ENCODE measurements at regions of chr16 and their contacts with region 1.

Region 1: GRCh38 chr16:4402439-4403132 is 13.8 kb downstream of the CORO7 start:
- DNase-seq: peak; percentile 94
- ATAC-seq: peak; percentile 77
- H3K4me3 Mint-ChIP-seq: peak overlapping the region; percentile 30
- H3K27ac Mint-ChIP-seq: no peak overlapping the region
- H3K4me1 Mint-ChIP-seq: peaks cover 6% of the 10 kb centered on the region
- H3K27me3 Mint-ChIP-seq: no peaks in the 10 kb centered on the region
- CTCF ChIP-seq: peak; percentile 97

Region 2: GRCh38 chr16:4271176-4272066 is 131.2 kb before region 1 on chr16:
- CTCF ChIA-PET with region 1: interaction called, 17 read pairs
- POLR2A ChIA-PET with region 1: no interaction called
- DNase-seq: peak; percentile 94
- ATAC-seq: peak; percentile 75
- H3K4me3 Mint-ChIP-seq: peak overlapping the region; percentile 69
- H3K27ac Mint-ChIP-seq: peak overlapping the region; percentile 80
- H3K4me1 Mint-ChIP-seq: peaks cover 14% of the 10 kb centered on the region
- H3K27me3 Mint-ChIP-seq: no peaks in the 10 kb centered on the region
- CTCF ChIP-seq: no peak

Region 3: DNA sequence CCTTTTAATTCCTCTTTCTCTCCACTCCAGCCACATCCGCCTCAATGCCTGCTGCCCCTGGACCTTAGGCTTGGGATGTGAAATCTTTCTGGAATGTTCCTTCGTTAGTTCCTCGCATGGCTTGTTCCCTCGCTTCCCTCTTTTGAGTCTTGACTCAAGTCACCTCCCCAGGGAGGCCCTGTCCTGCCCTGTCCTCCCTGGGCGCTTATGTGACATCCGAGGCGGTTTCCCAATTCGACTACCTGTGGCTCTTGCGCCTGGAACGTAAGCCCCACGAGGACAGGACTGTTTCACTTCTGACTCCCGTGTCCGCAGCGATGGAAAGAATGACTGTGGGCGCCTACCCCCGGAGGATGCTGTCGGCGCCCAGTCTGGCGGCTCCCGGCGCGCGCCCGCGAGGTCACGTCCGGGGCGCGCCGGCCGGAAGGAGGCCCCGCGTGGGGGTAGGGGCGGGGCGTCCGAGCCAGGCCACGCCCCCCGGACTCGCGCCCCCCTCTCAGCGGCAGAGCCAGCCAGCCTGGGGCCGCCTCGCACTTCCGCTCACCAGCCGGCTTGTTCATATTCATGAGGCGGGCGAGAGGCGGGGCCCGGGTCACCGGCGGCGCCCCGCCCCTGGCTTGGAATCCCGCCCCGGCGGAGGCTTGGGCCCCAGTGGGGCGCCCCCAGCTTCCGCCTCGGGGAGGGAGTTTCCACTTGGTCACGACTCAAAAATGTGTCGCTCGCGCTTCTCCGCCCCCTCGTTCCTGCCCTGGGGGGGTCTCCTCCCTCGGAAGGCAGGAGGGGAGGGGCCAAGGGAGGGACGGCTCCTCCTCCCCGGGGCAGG is 95.2 kb before region 1 on chr16:
- CTCF ChIA-PET with region 1: interaction called, 75 read pairs
- POLR2A ChIA-PET with region 1: interaction called, 3 read pairs
- DNase-seq: peak; percentile 94
- ATAC-seq: peak; percentile 78
- H3K4me3 Mint-ChIP-seq: peak overlapping the region; percentile 96
- H3K27ac Mint-ChIP-seq: peak overlapping the region; percentile 97
- H3K4me1 Mint-ChIP-seq: peaks cover 39% of the 10 kb centered on the region
- H3K27me3 Mint-ChIP-seq: no peaks in the 10 kb centered on the region; the same call in 1 of the 2 replicates
- CTCF ChIP-seq: no peak

Region 4: GRCh38 chr16:4339909-4340308 is 62.7 kb before region 1 on chr16:
- CTCF ChIA-PET with region 1: interaction called, 44 read pairs
- POLR2A ChIA-PET with region 1: no interaction called
- DNase-seq: no peak
- ATAC-seq: no peak
- H3K4me3 Mint-ChIP-seq: no peak overlapping the region
- H3K27ac Mint-ChIP-seq: no peak overlapping the region
- H3K4me1 Mint-ChIP-seq: no peaks in the 10 kb centered on the region
- H3K27me3 Mint-ChIP-seq: no peaks in the 10 kb centered on the region; the same call in 1 of the 2 replicates
- CTCF ChIP-seq: no peak

Region 5: GRCh38 chr16:4358831-4359561 is 43.6 kb before region 1 on chr16:
- CTCF ChIA-PET with region 1: interaction called, 322 read pairs
- POLR2A ChIA-PET with region 1: interaction called, 3 read pairs
- DNase-seq: peak; percentile 94
- ATAC-seq: peak; percentile 90
- H3K4me3 Mint-ChIP-seq: no peak overlapping the region
- H3K27ac Mint-ChIP-seq: no peak overlapping the region
- H3K4me1 Mint-ChIP-seq: no peaks in the 10 kb centered on the region
- H3K27me3 Mint-ChIP-seq: no peaks in the 10 kb centered on the region
- CTCF ChIP-seq: peak; percentile 100

Region 6: DNA sequence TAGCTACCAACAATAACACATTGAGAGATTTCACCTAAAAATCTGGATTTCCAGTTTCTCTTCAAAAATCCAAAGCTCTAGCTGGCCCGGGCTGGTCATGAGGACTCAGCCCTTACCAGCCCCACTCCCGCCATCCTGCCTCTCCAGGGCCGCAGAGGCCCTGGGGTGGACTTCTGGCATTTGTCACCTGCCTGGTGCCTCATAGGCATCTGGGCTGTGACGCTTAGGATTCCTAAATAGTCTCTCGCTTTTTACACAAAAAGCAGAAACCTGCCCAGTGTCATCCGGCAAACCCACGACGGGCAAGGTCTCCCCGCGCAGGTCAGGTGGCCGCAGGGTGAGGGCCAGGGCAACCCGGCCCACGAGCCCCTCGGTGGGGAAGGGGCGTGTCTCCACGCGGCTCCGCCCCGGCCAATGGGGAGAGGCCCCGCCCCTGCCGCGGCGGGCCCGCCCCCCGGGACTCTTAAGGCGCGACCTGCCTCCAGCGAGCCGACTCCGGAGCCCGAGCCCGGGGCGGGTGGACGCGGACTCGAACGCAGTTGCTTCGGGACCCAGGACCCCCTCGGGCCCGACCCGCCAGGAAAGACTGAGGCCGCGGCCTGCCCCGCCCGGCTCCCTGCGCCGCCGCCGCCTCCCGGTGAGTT is 31.1 kb before region 1 on chr16 and contains the start of gene VASN:
- CTCF ChIA-PET with region 1: interaction called, 273 read pairs
- POLR2A ChIA-PET with region 1: no interaction called
- DNase-seq: peak; percentile 83
- ATAC-seq: peak; percentile 77
- H3K4me3 Mint-ChIP-seq: peak within 1 kb of the TSS; percentile 83
- H3K27ac Mint-ChIP-seq: no peak within 1 kb of the TSS
- H3K4me1 Mint-ChIP-seq: peaks cover 25% of the 10 kb centered on the region
- H3K27me3 Mint-ChIP-seq: no peaks in the 10 kb centered on the region
- CTCF ChIP-seq: no peak
- total RNA-seq, gene VASN: 8.0 to 9.1 TPM (median 8.3 TPM) in 3 replicates